CD4-positive, alpha-beta T cell (primary cell): ENCODE measurements at regions of chr9 and their contacts with region 1.

Region 1: GRCh38 chr9:83937911-83938323 is 16.7 kb upstream of the KIF27 start:
- DNase-seq: peak in 6 of 14 experiments; percentile 9 to 81 (median 56)
- ATAC-seq: peak; percentile 60
- H3K4me3 ChIP-seq: no peak overlapping the region
- H3K4me3 Mint-ChIP-seq: no peak overlapping the region
- H3K27ac ChIP-seq: no peak overlapping the region
- H3K27ac Mint-ChIP-seq: no peak overlapping the region
- H3K4me1 ChIP-seq: no peaks in the 10 kb centered on the region
- H3K4me1 Mint-ChIP-seq: no peaks in the 10 kb centered on the region
- H3K27me3 ChIP-seq: no peaks in the 10 kb centered on the region
- H3K27me3 Mint-ChIP-seq: no peaks in the 10 kb centered on the region
- CTCF ChIP-seq: peak; percentile 83

Region 2: DNA sequence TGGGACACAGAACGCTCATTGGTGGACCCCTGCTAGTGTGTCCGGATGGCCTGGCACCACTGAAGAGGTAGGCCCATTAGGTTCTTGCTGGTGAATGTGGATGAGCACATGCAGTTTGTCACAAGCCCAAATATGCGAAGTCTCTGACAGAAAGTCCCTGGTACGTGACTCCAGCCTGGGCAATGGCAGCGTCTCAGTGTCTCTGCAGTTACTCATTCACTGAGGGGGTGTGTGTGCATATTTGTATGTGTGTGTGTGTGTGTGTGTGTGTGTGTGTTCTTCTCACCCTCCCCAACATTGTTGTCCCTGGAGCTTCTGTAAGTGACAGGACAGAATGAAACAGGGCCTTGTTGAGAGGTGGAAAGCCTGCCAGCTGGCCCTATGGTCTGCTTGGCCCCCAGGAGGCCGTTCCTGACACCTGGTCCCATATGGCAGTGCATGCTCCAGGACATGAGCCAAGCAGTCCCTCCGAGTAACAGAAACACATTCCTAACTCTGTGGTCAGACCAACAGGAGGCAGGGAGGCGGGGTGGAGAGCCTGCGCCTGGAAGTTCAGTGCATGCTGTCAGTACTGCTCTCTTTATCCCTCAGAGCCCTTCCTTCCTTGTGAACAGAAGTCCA is 232.7 kb after region 1 on chr9:
- CTCF ChIA-PET with region 1: interaction called, 4 read pairs
- POLR2A ChIA-PET with region 1: no interaction called
- intact Hi-C with region 1: loop called (anchors 1 kb)
- DNase-seq: no peak
- ATAC-seq: no peak
- H3K4me3 ChIP-seq: no peak overlapping the region
- H3K4me3 Mint-ChIP-seq: no peak overlapping the region
- H3K27ac ChIP-seq: no peak overlapping the region
- H3K27ac Mint-ChIP-seq: no peak overlapping the region
- H3K4me1 ChIP-seq: no peaks in the 10 kb centered on the region
- H3K4me1 Mint-ChIP-seq: no peaks in the 10 kb centered on the region
- H3K27me3 ChIP-seq: no peaks in the 10 kb centered on the region
- H3K27me3 Mint-ChIP-seq: no peaks in the 10 kb centered on the region
- CTCF ChIP-seq: no peak

Region 3: DNA sequence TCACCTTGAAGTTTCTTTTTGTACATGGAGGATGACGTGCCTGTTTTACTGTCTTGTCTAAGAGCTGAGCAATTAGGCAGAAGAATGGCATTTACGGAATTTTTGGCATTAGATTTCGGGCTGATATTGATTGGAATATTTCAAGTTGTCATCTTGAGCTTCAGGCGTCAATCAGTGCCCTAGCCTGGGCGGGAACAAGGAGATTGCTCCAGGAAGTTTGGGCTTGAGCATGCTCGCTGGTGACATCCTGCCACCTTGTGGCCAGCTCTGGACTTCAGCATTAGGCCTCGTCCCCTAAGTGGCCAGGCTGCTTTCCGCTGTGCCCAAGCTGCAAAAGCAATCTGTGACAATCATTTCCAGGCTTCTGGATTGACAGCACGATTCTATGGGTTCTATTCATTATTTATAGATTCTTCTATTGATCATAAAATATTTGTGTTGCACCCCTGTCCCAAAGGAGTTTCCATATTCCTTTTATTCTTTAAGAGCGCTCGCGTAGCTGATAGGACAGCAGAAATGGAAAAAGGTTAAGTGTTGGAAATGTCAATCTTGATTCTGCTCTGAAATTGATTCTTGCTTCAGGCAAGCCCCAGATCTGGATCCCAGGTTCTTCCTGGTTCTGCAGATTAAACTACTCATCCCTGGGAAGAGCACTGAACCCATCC is 323.3 kb after region 1 on chr9:
- CTCF ChIA-PET with region 1: interaction called, 6 read pairs
- POLR2A ChIA-PET with region 1: interaction called, 3 read pairs
- intact Hi-C with region 1: loop called (anchors 1 kb)
- DNase-seq: peak; percentile 11 to 73 (median 36)
- ATAC-seq: no peak
- H3K4me3 ChIP-seq: no peak overlapping the region
- H3K4me3 Mint-ChIP-seq: no peak overlapping the region
- H3K27ac ChIP-seq: no peak overlapping the region
- H3K27ac Mint-ChIP-seq: no peak overlapping the region
- H3K4me1 ChIP-seq: peaks cover 3% of the 10 kb centered on the region
- H3K4me1 Mint-ChIP-seq: no peaks in the 10 kb centered on the region
- H3K27me3 ChIP-seq: peaks cover 0 to 5% of the 10 kb centered on the region in 2 experiments
- H3K27me3 Mint-ChIP-seq: peaks cover 20% of the 10 kb centered on the region
- CTCF ChIP-seq: peak; percentile 77